ENCODE measurements at regions of chr1 and their contacts with region 1.

Region 1: DNA sequence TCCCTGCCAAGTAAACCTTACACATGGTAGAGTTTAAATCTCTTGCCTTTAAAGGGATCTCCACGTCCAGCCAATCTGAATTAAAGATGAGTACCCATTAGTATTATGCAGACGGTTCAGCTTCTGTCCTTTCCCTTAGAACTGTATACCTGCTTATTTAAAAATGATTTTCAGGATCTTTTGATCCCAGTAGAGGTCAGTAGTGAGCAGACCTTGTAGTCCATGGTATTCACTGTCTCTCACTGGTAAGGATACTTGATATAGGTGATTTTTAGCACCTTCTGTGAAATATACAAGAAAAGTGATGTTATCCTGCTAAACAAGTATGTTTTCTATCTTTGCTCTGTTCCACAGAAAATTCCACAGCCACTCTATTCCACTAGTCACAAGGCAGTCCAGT is 1211.6 kb upstream of the ADGRL4 start:
- DNase-seq: peak; percentile 54
- ATAC-seq: peak; percentile 92
- H3K4me3 ChIP-seq: no peak overlapping the region
- H3K27ac ChIP-seq: no peak overlapping the region
- H3K4me1 ChIP-seq: no peaks in the 10 kb centered on the region
- H3K27me3 ChIP-seq: no peaks in the 10 kb centered on the region
- CTCF ChIP-seq: peak; percentile 26 to 60 (median 52); a peak in 5 of 6 replicates
- POLR2A ChIP-seq: no peak
- RAD21 ChIP-seq: peak; percentile 48

Region 2: GRCh38 chr1:79497193-79497773 is 720.8 kb before region 1 on chr1:
- CTCF ChIA-PET with region 1: no interaction called
- POLR2A ChIA-PET with region 1: no interaction called
- RAD21 ChIA-PET with region 1: no interaction called
- intact Hi-C with region 1: loop called (anchors 5 kb)
- DNase-seq: peak; percentile 10
- ATAC-seq: peak; percentile 44; the same call in 1 of the 2 replicates
- H3K4me3 ChIP-seq: no peak overlapping the region
- H3K27ac ChIP-seq: no peak overlapping the region
- H3K4me1 ChIP-seq: no peaks in the 10 kb centered on the region
- H3K27me3 ChIP-seq: no peaks in the 10 kb centered on the region
- CTCF ChIP-seq: peak; percentile 49 to 88 (median 77); a peak in 5 of 6 replicates
- POLR2A ChIP-seq: no peak
- RAD21 ChIP-seq: peak; percentile 78

Region 3: DNA sequence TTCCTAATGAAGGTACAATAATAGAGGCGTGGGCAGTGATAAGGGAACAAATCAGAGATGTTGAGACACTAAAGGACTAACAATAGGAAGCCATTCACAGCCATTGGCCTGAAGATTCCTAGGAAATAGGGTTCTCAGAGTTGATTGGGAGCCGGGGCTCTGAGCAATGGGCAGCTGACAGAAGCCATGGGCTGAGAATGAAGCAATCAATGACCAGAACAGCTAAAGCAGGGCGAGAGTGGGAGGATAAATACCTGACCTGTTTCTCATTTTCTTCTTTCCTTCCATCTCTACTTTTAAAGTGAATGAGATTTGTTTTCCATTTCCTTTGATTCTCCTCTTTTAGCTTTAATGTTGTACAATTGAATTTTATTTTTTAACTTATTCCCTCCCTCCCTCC is 436.9 kb before region 1 on chr1:
- CTCF ChIA-PET with region 1: no interaction called
- POLR2A ChIA-PET with region 1: no interaction called
- RAD21 ChIA-PET with region 1: no interaction called
- intact Hi-C with region 1: no loop called
- DNase-seq: no peak
- ATAC-seq: no peak
- H3K4me3 ChIP-seq: no peak overlapping the region
- H3K27ac ChIP-seq: no peak overlapping the region
- H3K4me1 ChIP-seq: no peaks in the 10 kb centered on the region
- H3K27me3 ChIP-seq: no peaks in the 10 kb centered on the region
- CTCF ChIP-seq: no peak
- POLR2A ChIP-seq: no peak
- RAD21 ChIP-seq: no peak

Region 4: DNA sequence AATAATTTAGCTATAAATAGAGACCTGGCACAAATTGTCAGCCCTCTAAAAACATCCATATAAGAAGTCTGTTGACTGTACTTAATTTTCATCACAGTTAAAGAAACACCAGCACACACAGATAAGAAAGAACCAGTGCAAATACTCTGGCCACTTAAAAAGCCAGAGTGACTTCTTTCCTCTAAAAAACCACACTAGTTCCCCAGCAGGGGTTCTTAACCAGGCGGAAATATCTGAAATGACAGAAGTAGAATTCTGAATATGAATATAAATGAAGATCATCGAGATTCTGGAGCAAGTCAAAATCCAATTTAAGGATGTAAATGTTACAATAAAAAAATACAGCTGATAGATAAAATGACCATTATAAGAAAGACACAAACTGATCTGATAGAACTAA is 341.0 kb before region 1 on chr1:
- CTCF ChIA-PET with region 1: no interaction called
- POLR2A ChIA-PET with region 1: no interaction called
- RAD21 ChIA-PET with region 1: no interaction called
- intact Hi-C with region 1: no loop called
- DNase-seq: no peak
- ATAC-seq: no peak
- H3K4me3 ChIP-seq: no peak overlapping the region
- H3K27ac ChIP-seq: no peak overlapping the region
- H3K4me1 ChIP-seq: no peaks in the 10 kb centered on the region
- H3K27me3 ChIP-seq: no peaks in the 10 kb centered on the region
- CTCF ChIP-seq: no peak
- POLR2A ChIP-seq: no peak
- RAD21 ChIP-seq: no peak